Prostate gland (tissue), 2 donors: ENCODE measurements at regions of chr12 and their contacts with region 1.

Region 1: GRCh38 chr12:22459838-22460490 is 84.4 kb downstream of the C2CD5 start:
- DNase-seq: peak; percentile 32
- H3K4me3 ChIP-seq: no peak overlapping the region
- H3K27ac ChIP-seq: no peak overlapping the region
- H3K4me1 ChIP-seq: no peaks in the 10 kb centered on the region
- H3K27me3 ChIP-seq: no peaks in the 10 kb centered on the region
- CTCF ChIP-seq: peak in 3 of 4 experiments; percentile 52 to 57 (median 55)
- POLR2A ChIP-seq: no peak

Region 2: GRCh38 chr12:22083167-22083566 is 376.8 kb before region 1 on chr12:
- intact Hi-C with region 1: loop called (anchors 5 kb)
- DNase-seq: peak; percentile 20
- H3K4me3 ChIP-seq: no peak overlapping the region
- H3K27ac ChIP-seq: no peak overlapping the region
- H3K4me1 ChIP-seq: no peaks in the 10 kb centered on the region
- H3K27me3 ChIP-seq: no peaks in the 10 kb centered on the region
- CTCF ChIP-seq: peak; percentile 16 to 75 (median 64)
- POLR2A ChIP-seq: no peak